ENCODE measurements at regions of chr12 and their contacts with region 1.

Region 1: DNA sequence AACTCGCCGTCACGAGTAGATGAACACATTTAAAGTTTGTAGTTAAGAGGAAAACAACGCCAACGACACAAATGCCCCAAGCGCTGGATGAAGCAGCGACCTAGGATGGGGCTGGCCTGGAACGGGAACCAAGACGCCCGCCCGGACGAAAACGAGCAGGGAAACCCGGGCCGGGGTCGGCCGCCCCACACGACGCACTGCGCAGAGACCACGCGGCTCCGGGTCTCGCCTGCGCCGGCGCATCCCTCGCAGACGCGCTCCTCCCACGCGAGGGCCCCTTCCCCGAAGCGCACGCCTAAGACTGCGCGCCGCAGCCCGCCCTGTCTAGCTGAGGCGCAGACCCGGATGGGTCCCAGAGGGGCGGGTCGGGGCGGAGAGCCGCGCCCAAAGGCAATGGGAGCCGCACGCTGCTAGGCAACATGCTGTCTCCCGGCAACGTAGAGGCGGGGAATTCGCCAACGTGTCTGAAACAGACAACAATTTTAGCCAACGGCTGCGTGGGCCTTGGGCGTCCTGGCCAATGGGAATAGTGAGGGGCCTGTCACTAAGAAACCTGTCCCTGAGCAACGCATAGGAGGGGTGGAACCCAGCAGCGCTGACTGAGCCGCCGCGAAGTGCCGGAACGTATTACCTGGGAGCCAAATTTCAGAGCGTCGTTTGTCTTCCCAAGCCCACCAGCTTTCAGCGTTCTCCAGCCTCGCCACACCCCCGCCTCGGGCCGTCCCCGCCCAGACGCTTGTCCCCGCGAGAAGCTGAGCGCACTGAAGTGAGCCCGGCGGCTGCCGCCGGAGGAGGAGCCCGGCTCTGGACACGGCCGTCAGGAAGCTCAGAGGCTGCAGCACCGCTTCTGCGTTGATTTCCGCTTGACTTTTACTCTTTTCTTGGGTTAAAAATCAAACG is 21.0 kb upstream of the CHFR start:
- DNase-seq: peak; percentile 88 to 99 (median 95)
- ATAC-seq: peak; percentile 89
- H3K4me3 ChIP-seq: peak overlapping the region; percentile 85
- H3K4me3 Mint-ChIP-seq: peak overlapping the region; percentile 96
- H3K27ac ChIP-seq: peak overlapping the region; percentile 78 to 98
- H3K27ac Mint-ChIP-seq: peak overlapping the region; percentile 94
- H3K4me1 ChIP-seq: peaks cover 34% of the 10 kb centered on the region
- H3K4me1 Mint-ChIP-seq: peaks cover 26% of the 10 kb centered on the region
- H3K27me3 ChIP-seq: no peaks in the 10 kb centered on the region
- H3K27me3 Mint-ChIP-seq: no peaks in the 10 kb centered on the region
- CTCF ChIP-seq: no peak

Region 2: DNA sequence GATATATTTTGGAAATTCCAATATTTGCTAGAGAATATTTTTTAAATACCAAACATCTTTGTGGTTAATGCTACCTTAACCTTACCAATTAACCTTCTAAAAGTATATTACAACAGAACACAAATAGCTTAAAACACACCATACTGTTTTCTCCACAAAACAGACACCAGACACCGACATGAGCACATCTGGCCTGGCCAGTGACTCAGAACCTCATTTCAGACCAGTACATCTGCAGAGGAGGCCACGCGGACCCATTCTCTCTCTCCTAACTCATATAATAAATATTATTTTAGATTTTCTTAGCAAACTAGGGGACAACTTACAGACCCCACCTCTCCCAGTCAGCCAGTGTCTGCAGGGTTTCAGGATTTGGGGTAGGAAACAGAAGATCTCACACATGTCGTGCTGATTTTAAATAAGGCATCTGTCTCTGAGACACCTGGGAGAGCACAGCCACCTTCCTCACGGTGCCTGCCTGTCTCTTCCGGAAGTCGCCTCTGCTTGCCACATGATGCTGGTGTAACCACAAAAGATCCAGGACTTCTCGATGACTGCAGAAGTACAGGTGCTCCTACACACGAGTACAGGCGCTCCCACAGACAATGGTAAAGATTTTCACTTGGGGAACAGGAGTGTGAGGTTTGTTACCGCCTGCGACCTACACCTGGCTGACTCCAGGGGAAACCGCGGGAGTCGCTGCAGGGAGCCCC is 137.1 kb before region 1 on chr12:
- CTCF ChIA-PET with region 1: interaction called, 5 read pairs
- POLR2A ChIA-PET with region 1: interaction called, 4 read pairs
- intact Hi-C with region 1: loop called (anchors 1 to 2 kb)
- DNase-seq: peak; percentile 28 to 86 (median 55)
- ATAC-seq: peak; percentile 88
- H3K4me3 ChIP-seq: peak overlapping the region; percentile 4
- H3K4me3 Mint-ChIP-seq: peak overlapping the region; percentile 82
- H3K27ac ChIP-seq: peak overlapping the region; percentile 60 to 62
- H3K27ac Mint-ChIP-seq: peak overlapping the region; percentile 95
- H3K4me1 ChIP-seq: peaks cover 67% of the 10 kb centered on the region
- H3K4me1 Mint-ChIP-seq: peaks cover 62% of the 10 kb centered on the region
- H3K27me3 ChIP-seq: no peaks in the 10 kb centered on the region
- H3K27me3 Mint-ChIP-seq: no peaks in the 10 kb centered on the region
- CTCF ChIP-seq: no peak

Region 3: DNA sequence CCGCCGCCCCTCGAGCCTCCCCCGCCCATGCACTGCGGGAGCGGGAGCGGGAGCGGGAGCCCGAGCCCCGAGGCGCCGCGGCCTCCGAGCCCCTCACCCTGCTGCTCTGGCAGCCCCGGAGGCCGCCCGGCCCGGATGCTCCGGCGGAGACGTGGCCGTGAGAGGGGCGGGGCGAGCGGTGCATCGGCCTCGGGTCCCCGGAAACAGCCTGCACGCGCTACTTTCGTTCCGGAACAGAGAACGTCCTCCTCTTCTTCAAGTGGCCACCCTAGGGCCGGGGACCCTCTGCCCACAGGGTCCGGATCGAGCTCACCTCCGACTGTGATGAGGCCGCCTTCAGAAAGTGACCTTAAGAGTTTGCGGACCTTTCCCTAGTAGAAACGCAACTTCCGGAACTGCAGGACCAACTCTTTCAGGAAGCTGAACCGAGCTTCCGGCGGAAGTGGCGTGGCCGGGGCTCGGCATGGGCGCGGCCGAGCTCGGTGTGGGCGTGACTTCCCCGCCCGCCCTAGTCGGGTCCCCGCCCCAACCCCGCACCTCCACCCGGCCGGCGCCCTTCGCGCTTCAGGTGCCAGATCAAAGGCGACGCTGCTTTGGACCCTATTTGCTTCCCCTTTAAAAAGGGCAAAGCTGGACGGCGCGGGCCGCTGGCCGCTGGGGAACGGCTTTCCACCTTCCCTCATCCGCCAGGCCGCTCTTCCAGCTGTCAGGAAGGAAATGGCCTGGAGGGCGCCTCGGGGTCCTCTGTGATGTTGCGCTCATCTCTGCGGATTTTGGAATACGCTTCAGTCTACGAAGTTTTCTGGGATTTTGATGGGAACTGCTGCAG is 79.5 kb before region 1 on chr12 and contains the start of gene GOLGA3:
- CTCF ChIA-PET with region 1: interaction called, 7 read pairs
- POLR2A ChIA-PET with region 1: interaction called, 22 read pairs
- intact Hi-C with region 1: loop called (anchors 1 kb)
- DNase-seq: peak; percentile 91 to 98 (median 95)
- ATAC-seq: peak; percentile 91
- H3K4me3 ChIP-seq: peak within 1 kb of the TSS; percentile 90
- H3K4me3 Mint-ChIP-seq: peak within 1 kb of the TSS; percentile 99
- H3K27ac ChIP-seq: peak within 1 kb of the TSS; percentile 94 to 100
- H3K27ac Mint-ChIP-seq: peak within 1 kb of the TSS; percentile 100
- H3K4me1 ChIP-seq: peaks cover 37% of the 10 kb centered on the region
- H3K4me1 Mint-ChIP-seq: peaks cover 58% of the 10 kb centered on the region
- H3K27me3 ChIP-seq: no peaks in the 10 kb centered on the region
- H3K27me3 Mint-ChIP-seq: no peaks in the 10 kb centered on the region
- CTCF ChIP-seq: no peak
- total RNA-seq, gene GOLGA3: 31.5 to 34.0 TPM

Region 4: DNA sequence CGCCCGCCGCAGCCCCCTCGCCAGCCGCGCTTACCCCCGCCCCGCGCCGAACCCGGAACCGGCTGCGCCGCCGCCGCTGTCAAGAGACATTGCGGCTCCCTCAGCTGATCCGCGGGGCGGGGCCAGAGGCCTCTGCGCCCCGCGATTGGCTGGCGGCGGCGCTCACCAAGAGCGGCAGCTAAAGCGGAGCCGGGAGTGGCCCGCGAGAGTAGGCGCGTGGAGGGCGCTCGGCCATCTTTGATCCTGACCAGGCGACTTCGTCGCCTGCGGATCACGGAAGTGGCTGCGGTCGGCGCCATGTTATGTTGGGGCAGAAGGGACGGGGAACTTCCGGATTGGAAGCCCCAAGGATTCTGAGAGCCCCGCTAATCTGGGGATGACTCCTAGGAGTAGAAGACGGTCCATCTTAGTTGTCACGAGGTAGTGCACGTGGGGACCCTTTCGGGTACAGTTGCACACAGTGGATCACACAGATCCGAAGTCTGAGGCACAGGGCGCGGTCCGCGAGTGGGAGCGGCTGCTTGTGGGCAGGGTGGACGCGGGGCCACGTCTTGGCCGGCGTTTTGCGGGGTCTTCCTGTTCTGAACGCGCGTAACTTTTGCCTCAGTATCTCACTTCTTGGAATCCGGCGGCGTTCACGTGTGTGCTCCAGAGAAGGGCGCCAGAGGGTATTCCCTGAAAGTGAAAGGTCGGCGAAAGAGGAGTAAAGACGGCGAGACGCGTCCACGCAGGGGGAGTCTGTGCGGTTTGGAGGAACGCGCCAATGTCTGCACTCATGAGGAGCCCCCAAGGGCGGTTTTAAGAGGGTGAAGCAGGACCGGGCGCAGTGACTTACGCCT is 20.7 kb before region 1 on chr12 and contains the start of gene CHFR:
- CTCF ChIA-PET with region 1: interaction called, 11 read pairs
- POLR2A ChIA-PET with region 1: interaction called, 24 read pairs
- intact Hi-C with region 1: loop called (anchors 1 to 2 kb)
- DNase-seq: peak; percentile 87 to 98 (median 92)
- ATAC-seq: peak; percentile 97
- H3K4me3 ChIP-seq: peak within 1 kb of the TSS; percentile 77
- H3K4me3 Mint-ChIP-seq: peak within 1 kb of the TSS; percentile 97
- H3K27ac ChIP-seq: peak within 1 kb of the TSS; percentile 97
- H3K27ac Mint-ChIP-seq: peak within 1 kb of the TSS; percentile 100
- H3K4me1 ChIP-seq: peaks cover 22% of the 10 kb centered on the region
- H3K4me1 Mint-ChIP-seq: peaks cover 34% of the 10 kb centered on the region
- H3K27me3 ChIP-seq: no peaks in the 10 kb centered on the region
- H3K27me3 Mint-ChIP-seq: no peaks in the 10 kb centered on the region
- CTCF ChIP-seq: no peak
- total RNA-seq, gene CHFR: 75.1 to 85.6 TPM

Region 5: GRCh38 chr12:132986001-132986912 is 77.9 kb after region 1 on chr12 and contains the start of gene ZNF26:
- CTCF ChIA-PET with region 1: interaction called, 4 read pairs
- POLR2A ChIA-PET with region 1: interaction called, 16 read pairs
- intact Hi-C with region 1: loop called (anchors 1 kb)
- DNase-seq: peak; percentile 75 to 95 (median 84)
- ATAC-seq: peak; percentile 96
- H3K4me3 ChIP-seq: peak within 1 kb of the TSS; percentile 85
- H3K4me3 Mint-ChIP-seq: peak within 1 kb of the TSS; percentile 97
- H3K27ac ChIP-seq: peak within 1 kb of the TSS; percentile 76 to 84
- H3K27ac Mint-ChIP-seq: peak within 1 kb of the TSS; percentile 96
- H3K4me1 ChIP-seq: peaks cover 29% of the 10 kb centered on the region
- H3K4me1 Mint-ChIP-seq: peaks cover 38% of the 10 kb centered on the region
- H3K27me3 ChIP-seq: no peaks in the 10 kb centered on the region
- H3K27me3 Mint-ChIP-seq: no peaks in the 10 kb centered on the region
- CTCF ChIP-seq: no peak
- total RNA-seq, gene ZNF26: 29.1 to 31.9 TPM